ENCODE measurements at regions of chr9 and their contacts with region 1.

Region 1: GRCh38 chr9:9719373-9720112 is 893.3 kb downstream of the PTPRD start:
- DNase-seq: no peak
- H3K4me3 ChIP-seq: no peak overlapping the region
- H3K27ac ChIP-seq: no peak overlapping the region
- H3K4me1 ChIP-seq: no peaks in the 10 kb centered on the region
- H3K27me3 ChIP-seq: no peaks in the 10 kb centered on the region
- CTCF ChIP-seq: no peak
- EP300 ChIP-seq: no peak
- POLR2A ChIP-seq: no peak

Region 2: GRCh38 chr9:8980496-8981013 is 739.0 kb before region 1 on chr9:
- intact Hi-C with region 1: no loop called
- DNase-seq: no peak
- H3K4me3 ChIP-seq: no peak overlapping the region
- H3K27ac ChIP-seq: no peak overlapping the region
- H3K4me1 ChIP-seq: peaks cover 1% of the 10 kb centered on the region
- H3K27me3 ChIP-seq: no peaks in the 10 kb centered on the region
- CTCF ChIP-seq: no peak
- EP300 ChIP-seq: no peak
- POLR2A ChIP-seq: no peak

Region 3: DNA sequence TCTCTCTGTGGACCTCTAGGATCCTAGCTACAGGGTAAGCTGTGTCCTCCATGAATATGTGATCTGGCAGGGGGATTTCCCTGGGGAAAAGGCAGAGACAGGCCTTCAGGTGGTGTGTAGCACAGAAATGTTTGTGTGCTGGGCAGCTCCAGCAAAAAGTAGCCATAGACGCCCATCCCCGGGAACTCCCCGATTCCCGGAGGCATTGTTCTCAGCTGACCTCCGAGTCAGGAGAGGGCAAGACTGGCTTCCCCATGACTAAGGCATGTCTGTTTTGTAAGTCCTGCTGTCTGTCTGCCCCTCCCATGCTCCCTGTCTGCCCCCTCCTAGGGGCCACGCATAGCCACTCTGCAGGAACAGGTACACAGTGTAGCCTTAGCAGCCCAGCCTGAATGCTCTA is 58.8 kb after region 1 on chr9:
- intact Hi-C with region 1: loop called in 1 of 4 experiments (anchors 10 kb)
- DNase-seq: no peak
- H3K4me3 ChIP-seq: no peak overlapping the region
- H3K27ac ChIP-seq: no peak overlapping the region
- H3K4me1 ChIP-seq: no peaks in the 10 kb centered on the region
- H3K27me3 ChIP-seq: no peaks in the 10 kb centered on the region
- CTCF ChIP-seq: no peak
- EP300 ChIP-seq: no peak
- POLR2A ChIP-seq: no peak

Measured in ovary (tissue), 10 donors.